ENCODE measurements at regions of chr1 and their contacts with region 1.

Region 1: GRCh38 chr1:88935522-88936222 is 44.3 kb upstream of the GTF2B start:
- DNase-seq: peak; percentile 10
- H3K4me3 Mint-ChIP-seq: no peak overlapping the region
- H3K27ac Mint-ChIP-seq: no peak overlapping the region
- H3K4me1 Mint-ChIP-seq: no peaks in the 10 kb centered on the region
- H3K27me3 Mint-ChIP-seq: no peaks in the 10 kb centered on the region
- CTCF ChIP-seq: peak; percentile 29

Region 2: GRCh38 chr1:88736639-88737248 is 198.9 kb before region 1 on chr1:
- CTCF ChIA-PET with region 1: no interaction called
- intact Hi-C with region 1: loop called (anchors 5 kb)
- DNase-seq: peak; percentile 66
- H3K4me3 Mint-ChIP-seq: no peak overlapping the region
- H3K27ac Mint-ChIP-seq: peak overlapping the region; percentile 49
- H3K4me1 Mint-ChIP-seq: peaks cover 45% of the 10 kb centered on the region
- H3K27me3 Mint-ChIP-seq: no peaks in the 10 kb centered on the region
- CTCF ChIP-seq: peak; percentile 84

Region 3: GRCh38 chr1:89483010-89483756 is 547.5 kb after region 1 on chr1:
- CTCF ChIA-PET with region 1: no interaction called
- intact Hi-C with region 1: no loop called
- DNase-seq: peak; percentile 71
- H3K4me3 Mint-ChIP-seq: no peak overlapping the region
- H3K27ac Mint-ChIP-seq: no peak overlapping the region
- H3K4me1 Mint-ChIP-seq: no peaks in the 10 kb centered on the region
- H3K27me3 Mint-ChIP-seq: no peaks in the 10 kb centered on the region
- CTCF ChIP-seq: no peak